ENCODE measurements at regions of chrX and their contacts with region 1.

Region 1: GRCh38 chrX:109485470-109486340 is 3.8 kb upstream of the GUCY2F start:
- DNase-seq: peak; percentile 77
- H3K4me3 ChIP-seq: no peak overlapping the region
- H3K27ac ChIP-seq: no peak overlapping the region
- H3K4me1 ChIP-seq: peaks cover 30% of the 10 kb centered on the region
- CTCF ChIP-seq: peak; percentile 96

Region 2: GRCh38 chrX:109312757-109313156 is 172.9 kb before region 1 on chrX:
- CTCF ChIA-PET with region 1: no interaction called
- POLR2A ChIA-PET with region 1: no interaction called
- intact Hi-C with region 1: no loop called
- DNase-seq: no peak
- H3K4me3 ChIP-seq: no peak overlapping the region
- H3K27ac ChIP-seq: no peak overlapping the region
- H3K4me1 ChIP-seq: no peaks in the 10 kb centered on the region
- CTCF ChIP-seq: no peak

Region 3: GRCh38 chrX:109536439-109537336 is 51.0 kb after region 1 on chrX and contains the start of gene NXT2:
- CTCF ChIA-PET with region 1: no interaction called
- POLR2A ChIA-PET with region 1: no interaction called
- intact Hi-C with region 1: loop called (anchors 2 kb)
- DNase-seq: peak; percentile 90
- H3K4me3 ChIP-seq: peak within 1 kb of the TSS; percentile 91
- H3K27ac ChIP-seq: peak within 1 kb of the TSS; percentile 77
- H3K4me1 ChIP-seq: peaks cover 26% of the 10 kb centered on the region
- CTCF ChIP-seq: no peak
- total RNA-seq, gene NXT2: 12.3 and 24.8 TPM in 2 replicates

Region 4: DNA sequence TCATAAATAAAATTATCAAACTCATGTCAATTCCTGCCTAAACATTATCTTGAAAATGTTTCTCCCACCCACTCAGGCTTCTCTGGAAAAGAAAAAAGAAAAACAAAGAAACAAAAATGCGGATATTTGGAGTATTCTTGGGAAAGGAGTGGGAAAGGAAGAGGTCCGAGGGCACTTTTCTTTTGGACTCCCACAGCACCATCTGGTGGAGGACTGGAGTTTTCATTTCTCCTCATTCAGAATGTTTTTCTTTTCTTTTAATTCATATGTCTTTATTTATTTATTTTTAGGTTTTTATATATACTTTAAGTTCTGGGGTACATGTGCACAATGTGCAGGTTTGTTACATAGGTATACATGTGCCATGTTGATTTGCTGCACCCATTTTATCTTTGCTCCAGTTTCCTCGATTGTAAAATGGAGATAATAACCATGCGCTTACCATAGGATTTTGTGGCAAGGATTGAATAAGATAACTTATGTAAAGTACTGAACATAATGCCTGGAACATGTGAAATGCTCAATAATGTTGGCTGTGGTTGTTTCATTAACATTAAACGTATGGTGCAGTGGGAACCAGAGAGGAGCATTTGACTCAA is 147.3 kb after region 1 on chrX:
- CTCF ChIA-PET with region 1: interaction called, 6 read pairs
- POLR2A ChIA-PET with region 1: no interaction called
- intact Hi-C with region 1: loop called (anchors 1 kb)
- DNase-seq: peak; percentile 6
- H3K4me3 ChIP-seq: no peak overlapping the region
- H3K27ac ChIP-seq: no peak overlapping the region
- H3K4me1 ChIP-seq: no peaks in the 10 kb centered on the region
- CTCF ChIP-seq: peak; percentile 74

Region 5: DNA sequence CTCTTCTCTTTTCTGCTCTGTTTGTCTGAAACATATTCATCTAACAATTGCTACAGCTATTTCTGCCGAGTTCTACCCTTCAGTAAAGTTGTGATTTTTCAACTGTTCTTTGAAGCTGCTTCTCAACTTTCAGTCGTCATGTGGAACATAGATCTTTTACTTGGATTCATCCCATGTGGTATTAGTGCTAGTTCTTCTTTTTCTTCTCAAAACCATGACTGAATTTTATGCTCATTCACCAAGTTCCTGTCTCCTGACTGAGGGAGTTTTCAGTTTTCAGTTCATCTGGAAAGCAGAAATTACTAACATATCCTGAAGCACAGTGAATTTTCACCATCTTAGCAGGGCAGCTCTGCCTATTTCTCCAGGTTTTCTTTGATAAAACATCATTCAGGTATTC is 235.2 kb after region 1 on chrX:
- CTCF ChIA-PET with region 1: no interaction called
- POLR2A ChIA-PET with region 1: no interaction called
- intact Hi-C with region 1: no loop called
- DNase-seq: no peak
- H3K4me3 ChIP-seq: no peak overlapping the region
- H3K27ac ChIP-seq: no peak overlapping the region
- H3K4me1 ChIP-seq: no peaks in the 10 kb centered on the region
- CTCF ChIP-seq: no peak

Region 6: DNA sequence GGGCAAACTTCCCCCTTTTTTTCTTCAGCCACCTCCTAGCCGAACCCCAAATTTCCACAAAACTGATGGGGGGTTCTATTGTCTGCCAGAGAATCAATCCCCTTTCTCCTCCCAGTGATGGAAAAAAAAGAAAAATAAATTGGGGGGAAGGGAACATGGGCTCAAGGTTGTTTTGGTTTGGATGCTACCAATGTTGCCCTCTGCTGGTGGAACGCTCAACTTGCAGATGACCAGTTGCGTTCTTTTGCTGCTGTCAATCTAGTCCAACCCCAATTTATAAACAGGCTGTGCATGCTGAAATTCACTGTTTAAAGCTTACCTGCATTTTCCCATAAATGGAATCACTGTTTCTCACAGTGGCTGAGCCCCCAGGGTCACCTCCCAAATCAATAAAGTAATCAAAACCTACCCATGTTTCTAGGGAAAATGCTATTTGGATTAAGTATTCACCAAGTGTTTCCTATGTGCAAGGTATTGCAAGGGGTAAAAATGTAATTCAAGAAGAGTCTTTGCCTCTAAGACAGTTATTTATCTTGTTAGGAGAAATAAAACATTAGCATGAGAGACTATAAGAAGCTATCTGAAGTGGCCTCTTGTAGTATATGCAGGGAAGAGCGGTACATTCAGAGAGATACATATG is 400.5 kb after region 1 on chrX:
- CTCF ChIA-PET with region 1: no interaction called
- POLR2A ChIA-PET with region 1: interaction called, 3 read pairs
- intact Hi-C with region 1: loop called (anchors 5 kb)
- DNase-seq: peak; percentile 35
- H3K4me3 ChIP-seq: no peak overlapping the region
- H3K27ac ChIP-seq: no peak overlapping the region
- H3K4me1 ChIP-seq: peaks cover 12% of the 10 kb centered on the region
- CTCF ChIP-seq: peak; percentile 78